ENCODE measurements at regions of chr4 and their contacts with region 1.

Region 1: DNA sequence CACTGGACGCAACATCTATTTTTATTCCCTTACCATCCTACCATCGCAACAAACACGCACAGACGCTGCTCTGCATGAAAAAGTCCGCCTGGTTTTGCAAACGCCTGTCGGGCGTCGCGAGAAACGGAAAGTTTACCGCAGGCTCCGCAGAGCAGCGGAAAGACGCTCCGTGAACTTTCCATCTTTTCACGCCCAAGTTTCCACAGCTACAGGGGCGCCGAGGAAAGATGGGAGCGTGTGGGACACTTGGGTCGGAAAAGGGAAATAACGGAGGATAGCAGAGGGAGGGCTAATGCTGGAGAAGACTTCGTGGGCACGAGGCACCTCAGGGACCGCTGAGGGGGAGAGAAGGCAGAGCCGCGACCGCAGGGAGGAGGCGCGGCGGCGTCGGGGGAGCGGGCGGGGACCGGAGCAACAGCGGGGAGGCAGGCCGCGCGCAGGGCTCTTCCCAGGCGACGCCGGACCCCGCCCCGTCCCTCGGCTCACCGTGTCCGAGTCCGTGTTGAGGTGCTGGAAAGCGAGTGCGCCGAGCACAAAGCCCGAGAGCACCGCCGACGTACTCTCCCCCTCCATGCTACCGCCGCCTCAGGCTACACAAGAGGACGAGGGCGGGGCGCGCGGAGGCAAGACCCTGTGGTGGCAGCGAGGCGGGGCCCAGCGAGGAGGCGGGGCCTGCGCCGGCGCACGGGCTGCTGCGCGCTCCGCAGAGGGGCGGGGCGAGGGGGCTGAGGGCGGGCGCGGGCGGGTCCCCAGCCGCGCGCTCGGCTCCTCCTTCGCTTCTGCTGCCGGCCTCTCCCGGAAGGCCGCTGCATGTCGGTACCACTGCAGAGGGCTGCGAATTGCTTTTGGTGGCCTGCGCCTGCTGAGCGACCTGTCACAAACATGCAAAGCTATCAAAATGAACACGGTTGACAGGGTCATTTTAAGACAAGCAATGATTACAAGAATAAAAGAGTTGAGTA is at the start of gene ABRAXAS1:
- DNase-seq: peak; percentile 89 to 97 (median 94)
- ATAC-seq: peak; percentile 95
- H3K4me3 ChIP-seq: peak within 1 kb of the TSS; percentile 77 to 81
- H3K4me3 Mint-ChIP-seq: peak within 1 kb of the TSS; percentile 96
- H3K27ac ChIP-seq: peak within 1 kb of the TSS; percentile 71 to 72
- H3K27ac Mint-ChIP-seq: peak within 1 kb of the TSS; percentile 96
- H3K4me1 ChIP-seq: peaks cover 10% of the 10 kb centered on the region
- H3K4me1 Mint-ChIP-seq: peaks cover 35% of the 10 kb centered on the region
- H3K27me3 ChIP-seq: no peaks in the 10 kb centered on the region
- H3K27me3 Mint-ChIP-seq: no peaks in the 10 kb centered on the region
- CTCF ChIP-seq: no peak
- total RNA-seq, gene ABRAXAS1: 13.9 to 17.2 TPM

Region 2: DNA sequence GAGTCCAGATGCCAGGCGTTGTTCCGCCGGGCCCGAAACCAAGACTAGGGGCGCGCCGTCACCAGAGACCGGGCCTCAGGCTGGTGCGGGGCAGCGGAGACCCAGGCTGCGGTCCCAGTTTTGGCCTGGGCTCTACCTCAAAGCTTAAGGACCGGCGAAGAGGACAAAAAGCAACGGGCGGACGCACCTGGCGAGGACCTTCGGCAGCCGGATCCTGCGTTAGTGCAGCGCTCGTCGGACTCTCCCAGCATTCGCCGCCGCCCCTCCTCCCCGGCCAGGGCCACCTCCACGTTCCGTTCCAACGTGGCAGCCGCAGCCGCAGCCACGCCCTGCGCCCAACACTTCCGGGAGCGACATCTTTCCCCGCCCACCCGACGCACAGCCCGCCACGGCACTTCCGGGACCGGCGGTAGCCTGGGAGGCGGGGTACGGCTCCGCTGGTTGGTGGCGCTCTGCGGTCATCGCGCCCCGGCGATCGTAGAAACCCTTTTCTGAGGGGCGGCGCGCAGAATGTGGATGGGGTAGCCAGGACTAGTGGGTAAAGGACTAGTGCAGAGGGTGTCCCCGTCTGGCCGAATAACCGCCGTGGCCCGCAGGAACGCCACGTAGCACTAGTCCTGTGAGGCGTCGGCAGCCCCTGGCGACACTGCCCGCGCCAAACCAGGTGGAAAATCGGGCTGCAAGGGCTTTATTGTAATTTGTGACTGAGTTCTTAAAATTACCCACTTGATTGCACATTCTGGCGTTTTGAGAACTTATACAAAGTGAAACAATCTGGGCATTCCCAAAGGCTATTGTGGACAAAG is 593.7 kb before region 1 on chr4 and contains the start of gene SEC31A:
- CTCF ChIA-PET with region 1: no interaction called
- POLR2A ChIA-PET with region 1: no interaction called
- intact Hi-C with region 1: loop called (anchors 10 kb)
- DNase-seq: peak; percentile 93 to 99 (median 97)
- ATAC-seq: peak; percentile 93
- H3K4me3 ChIP-seq: peak within 1 kb of the TSS; percentile 87 to 88
- H3K4me3 Mint-ChIP-seq: peak within 1 kb of the TSS; percentile 89
- H3K27ac ChIP-seq: peak within 1 kb of the TSS; percentile 96
- H3K27ac Mint-ChIP-seq: peak within 1 kb of the TSS; percentile 98
- H3K4me1 ChIP-seq: peaks cover 22% of the 10 kb centered on the region
- H3K4me1 Mint-ChIP-seq: peaks cover 45% of the 10 kb centered on the region
- H3K27me3 ChIP-seq: no peaks in the 10 kb centered on the region
- H3K27me3 Mint-ChIP-seq: no peaks in the 10 kb centered on the region
- CTCF ChIP-seq: no peak
- total RNA-seq, gene SEC31A: 115 to 117 TPM

Region 3: DNA sequence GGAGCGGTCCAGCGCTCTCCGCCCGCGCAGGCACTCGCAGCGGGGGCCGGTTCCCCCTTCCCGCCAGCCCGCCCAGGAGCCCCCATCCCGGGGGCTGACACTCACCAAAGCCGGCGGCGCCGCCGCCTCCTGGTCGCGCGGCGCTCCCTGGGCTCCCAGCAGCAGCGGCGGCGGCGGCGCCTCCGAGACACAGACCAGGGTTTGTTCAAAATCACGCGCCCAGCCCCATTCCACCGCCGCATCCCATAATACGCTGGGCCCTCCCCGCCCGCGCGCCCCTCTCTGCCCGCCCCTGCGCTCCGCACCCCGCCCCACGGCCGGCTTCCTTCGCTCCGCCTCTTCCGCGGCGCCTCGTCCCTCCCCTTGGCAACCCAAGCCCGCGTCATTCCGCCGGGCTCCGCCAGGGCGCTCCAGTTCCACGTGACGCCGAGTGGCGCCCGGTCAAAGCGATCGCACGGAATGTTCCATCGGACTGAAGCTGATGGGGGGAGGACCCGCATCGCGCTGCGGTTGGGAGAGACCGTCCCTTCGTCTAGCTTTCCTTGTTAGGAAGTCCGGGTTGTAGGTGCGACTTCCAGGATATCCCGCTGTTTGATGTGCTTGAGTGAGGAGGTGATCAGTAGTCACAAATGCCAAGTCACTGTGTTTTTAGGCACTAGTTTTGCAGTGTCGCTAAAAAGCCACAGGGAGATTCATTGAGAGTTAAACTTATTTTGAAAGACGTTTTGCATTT is 471.9 kb before region 1 on chr4:
- CTCF ChIA-PET with region 1: no interaction called
- POLR2A ChIA-PET with region 1: no interaction called
- intact Hi-C with region 1: loop called in 1 of 2 experiments (anchors 10 kb)
- DNase-seq: peak; percentile 94 to 98 (median 96)
- ATAC-seq: peak; percentile 88
- H3K4me3 ChIP-seq: peak overlapping the region; percentile 54 to 69
- H3K4me3 Mint-ChIP-seq: peak overlapping the region; percentile 90
- H3K27ac ChIP-seq: peak overlapping the region; percentile 56 to 95
- H3K27ac Mint-ChIP-seq: peak overlapping the region; percentile 91
- H3K4me1 ChIP-seq: peaks cover 31% of the 10 kb centered on the region
- H3K4me1 Mint-ChIP-seq: peaks cover 40% of the 10 kb centered on the region
- H3K27me3 ChIP-seq: no peaks in the 10 kb centered on the region
- H3K27me3 Mint-ChIP-seq: no peaks in the 10 kb centered on the region
- CTCF ChIP-seq: peak; percentile 65

Region 4: GRCh38 chr4:83034630-83035494 is 449.9 kb before region 1 on chr4 and contains the start of gene COPS4:
- CTCF ChIA-PET with region 1: no interaction called
- POLR2A ChIA-PET with region 1: no interaction called
- intact Hi-C with region 1: loop called (anchors 1 to 10 kb)
- DNase-seq: peak; percentile 87 to 100 (median 94)
- ATAC-seq: peak; percentile 98
- H3K4me3 ChIP-seq: peak within 1 kb of the TSS; percentile 73 to 90
- H3K4me3 Mint-ChIP-seq: peak within 1 kb of the TSS; percentile 99
- H3K27ac ChIP-seq: peak within 1 kb of the TSS; percentile 76 to 92
- H3K27ac Mint-ChIP-seq: peak within 1 kb of the TSS; percentile 99
- H3K4me1 ChIP-seq: peaks cover 16% of the 10 kb centered on the region
- H3K4me1 Mint-ChIP-seq: peaks cover 41% of the 10 kb centered on the region
- H3K27me3 ChIP-seq: no peaks in the 10 kb centered on the region
- H3K27me3 Mint-ChIP-seq: no peaks in the 10 kb centered on the region
- CTCF ChIP-seq: peak; percentile 51
- total RNA-seq, gene COPS4: 32.2 to 35.2 TPM

Region 5: GRCh38 chr4:83297548-83298260 is 187.1 kb before region 1 on chr4:
- CTCF ChIA-PET with region 1: no interaction called
- POLR2A ChIA-PET with region 1: no interaction called
- intact Hi-C with region 1: no loop called
- DNase-seq: peak in 1 of 9 experiments; percentile 35
- ATAC-seq: peak; percentile 42
- H3K4me3 ChIP-seq: no peak overlapping the region
- H3K4me3 Mint-ChIP-seq: no peak overlapping the region
- H3K27ac ChIP-seq: peak overlapping the region in 1 of 2 experiments; percentile 25
- H3K27ac Mint-ChIP-seq: peak overlapping the region; percentile 63
- H3K4me1 ChIP-seq: peaks cover 3% of the 10 kb centered on the region
- H3K4me1 Mint-ChIP-seq: peaks cover 12% of the 10 kb centered on the region
- H3K27me3 ChIP-seq: no peaks in the 10 kb centered on the region
- H3K27me3 Mint-ChIP-seq: no peaks in the 10 kb centered on the region
- CTCF ChIP-seq: no peak

Region 6: GRCh38 chr4:83503974-83504373 is 19.2 kb after region 1 on chr4:
- CTCF ChIA-PET with region 1: no interaction called
- POLR2A ChIA-PET with region 1: interaction called, 5 read pairs
- intact Hi-C with region 1: loop called in 1 of 2 experiments (anchors 1 kb)
- DNase-seq: peak in 3 of 9 experiments; percentile 19 to 46 (median 30)
- ATAC-seq: peak; percentile 65
- H3K4me3 ChIP-seq: no peak overlapping the region
- H3K4me3 Mint-ChIP-seq: no peak overlapping the region
- H3K27ac ChIP-seq: peak overlapping the region in 1 of 2 experiments; percentile 21
- H3K27ac Mint-ChIP-seq: peak overlapping the region; percentile 72
- H3K4me1 ChIP-seq: peaks cover 13% of the 10 kb centered on the region
- H3K4me1 Mint-ChIP-seq: peaks cover 15% of the 10 kb centered on the region
- H3K27me3 ChIP-seq: no peaks in the 10 kb centered on the region
- H3K27me3 Mint-ChIP-seq: peaks cover 2% of the 10 kb centered on the region
- CTCF ChIP-seq: no peak

Region 7: GRCh38 chr4:83535520-83536361 is 51.0 kb after region 1 on chr4 and contains the start of gene GPAT3:
- CTCF ChIA-PET with region 1: interaction called, 3 read pairs
- POLR2A ChIA-PET with region 1: interaction called, 3 read pairs
- intact Hi-C with region 1: loop called (anchors 1 to 5 kb)
- DNase-seq: peak; percentile 30 to 74 (median 65)
- ATAC-seq: peak; percentile 80
- H3K4me3 ChIP-seq: peak within 1 kb of the TSS; percentile 70 to 86
- H3K4me3 Mint-ChIP-seq: peak within 1 kb of the TSS; percentile 89
- H3K27ac ChIP-seq: peak within 1 kb of the TSS in 1 of 2 experiments; percentile 37
- H3K27ac Mint-ChIP-seq: peak within 1 kb of the TSS; percentile 69
- H3K4me1 ChIP-seq: peaks cover 6% of the 10 kb centered on the region
- H3K4me1 Mint-ChIP-seq: peaks cover 22% of the 10 kb centered on the region
- H3K27me3 ChIP-seq: peaks cover 0 to 2% of the 10 kb centered on the region in 2 experiments
- H3K27me3 Mint-ChIP-seq: peaks cover 18% of the 10 kb centered on the region
- CTCF ChIP-seq: no peak
- total RNA-seq, gene GPAT3: 3.0 to 3.5 TPM

Region 8: GRCh38 chr4:84582302-84583000 is 1097.7 kb after region 1 on chr4:
- CTCF ChIA-PET with region 1: no interaction called
- POLR2A ChIA-PET with region 1: no interaction called
- intact Hi-C with region 1: loop called (anchors 2 to 10 kb)
- DNase-seq: peak; percentile 75 to 95 (median 86)
- ATAC-seq: peak; percentile 86
- H3K4me3 ChIP-seq: peak overlapping the region; percentile 44 to 64
- H3K4me3 Mint-ChIP-seq: peak overlapping the region; percentile 80
- H3K27ac ChIP-seq: no peak overlapping the region
- H3K27ac Mint-ChIP-seq: peak overlapping the region; percentile 60
- H3K4me1 ChIP-seq: peaks cover 16% of the 10 kb centered on the region
- H3K4me1 Mint-ChIP-seq: peaks cover 15% of the 10 kb centered on the region
- H3K27me3 ChIP-seq: peaks cover 0 to 15% of the 10 kb centered on the region in 2 experiments
- H3K27me3 Mint-ChIP-seq: peaks cover 38% of the 10 kb centered on the region
- CTCF ChIP-seq: no peak

Measured in CD8-positive, alpha-beta T cell (primary cell).